Keratinocyte (primary cell): ENCODE measurements at regions of chr3 and their contacts with region 1.

Region 1: GRCh38 chr3:157201648-157202278 is 41.8 kb upstream of the CCNL1 start:
- DNase-seq: no peak
- H3K4me3 ChIP-seq: no peak overlapping the region
- H3K27ac ChIP-seq: no peak overlapping the region
- H3K4me1 ChIP-seq: no peaks in the 10 kb centered on the region
- H3K27me3 ChIP-seq: peaks cover 4% of the 10 kb centered on the region
- CTCF ChIP-seq: peak in 2 of 3 experiments; percentile 35 to 36

Region 2: GRCh38 chr3:157493627-157494550 is 292.1 kb after region 1 on chr3:
- dilution Hi-C with region 1: loop called (anchors 25 kb)
- DNase-seq: no peak
- H3K4me3 ChIP-seq: no peak overlapping the region
- H3K27ac ChIP-seq: no peak overlapping the region
- H3K4me1 ChIP-seq: peaks cover 2% of the 10 kb centered on the region
- H3K27me3 ChIP-seq: no peaks in the 10 kb centered on the region
- CTCF ChIP-seq: peak in 2 of 3 experiments; percentile 55 to 60